Sigmoid colon (tissue), 7 donors: ENCODE measurements at regions of chr7 and their contacts with region 1.

Region 1: GRCh38 chr7:158976849-158977593 is 120.7 kb downstream of the DYNC2I1 start:
- DNase-seq: peak; percentile 88
- H3K4me3 ChIP-seq: peak overlapping the region; percentile 11 to 45 (median 38)
- H3K27ac ChIP-seq: peak overlapping the region; percentile 29 to 71 (median 46)
- H3K4me1 ChIP-seq: peaks cover 0 to 37% (median 24%) of the 10 kb centered on the region in 4 donors
- H3K27me3 ChIP-seq: no peaks in the 10 kb centered on the region
- CTCF ChIP-seq: peak; percentile 72 to 92 (median 89)
- EP300 ChIP-seq: no peak
- POLR2A ChIP-seq: no peak

Region 2: GRCh38 chr7:158695726-158696452 is 281.1 kb before region 1 on chr7:
- intact Hi-C with region 1: loop called (anchors 2 kb)
- DNase-seq: peak; percentile 83
- H3K4me3 ChIP-seq: no peak overlapping the region
- H3K27ac ChIP-seq: peak overlapping the region; percentile 9 to 51 (median 37)
- H3K4me1 ChIP-seq: peaks cover 0 to 12% (median 4%) of the 10 kb centered on the region in 4 donors
- H3K27me3 ChIP-seq: no peaks in the 10 kb centered on the region
- CTCF ChIP-seq: peak; percentile 40 to 65 (median 54)
- EP300 ChIP-seq: no peak
- POLR2A ChIP-seq: no peak

Region 3: GRCh38 chr7:158782761-158783401 is 194.1 kb before region 1 on chr7:
- intact Hi-C with region 1: loop called (anchors 2 kb)
- DNase-seq: peak; percentile 92
- H3K4me3 ChIP-seq: peak overlapping the region in 2 of 4 donors; percentile 20 to 23
- H3K27ac ChIP-seq: peak overlapping the region; percentile 84 to 89 (median 87)
- H3K4me1 ChIP-seq: peaks cover 0 to 70% (median 58%) of the 10 kb centered on the region in 4 donors
- H3K27me3 ChIP-seq: no peaks in the 10 kb centered on the region
- CTCF ChIP-seq: peak; percentile 46 to 67 (median 48)
- EP300 ChIP-seq: peak in 1 of 4 donors; percentile 11
- POLR2A ChIP-seq: no peak

Region 4: GRCh38 chr7:158957921-158958491 is 19.0 kb before region 1 on chr7:
- intact Hi-C with region 1: no loop called
- DNase-seq: no peak
- H3K4me3 ChIP-seq: no peak overlapping the region
- H3K27ac ChIP-seq: no peak overlapping the region
- H3K4me1 ChIP-seq: peaks cover 0 to 15% (median 9%) of the 10 kb centered on the region in 4 donors
- H3K27me3 ChIP-seq: peaks cover 0 to 26% (median 11%) of the 10 kb centered on the region in 3 donors
- CTCF ChIP-seq: no peak
- EP300 ChIP-seq: no peak
- POLR2A ChIP-seq: no peak

Region 5: GRCh38 chr7:159010937-159011721 is 34.1 kb after region 1 on chr7:
- intact Hi-C with region 1: loop called (anchors 2 kb)
- DNase-seq: peak; percentile 42
- H3K4me3 ChIP-seq: no peak overlapping the region
- H3K27ac ChIP-seq: peak overlapping the region in 3 of 4 donors; percentile 82 to 85 (median 85)
- H3K4me1 ChIP-seq: peaks cover 0 to 52% (median 51%) of the 10 kb centered on the region in 4 donors
- H3K27me3 ChIP-seq: no peaks in the 10 kb centered on the region
- CTCF ChIP-seq: no peak
- EP300 ChIP-seq: no peak
- POLR2A ChIP-seq: no peak